AG04449 (cell line): ENCODE measurements at regions of chr2 and their contacts with region 1.

Region 1: GRCh38 chr2:197124639-197125390 is 185.8 kb downstream of the ANKRD44 start:
- DNase-seq: peak; percentile 50
- H3K4me3 ChIP-seq: no peak overlapping the region
- CTCF ChIP-seq: no peak

Region 2: DNA sequence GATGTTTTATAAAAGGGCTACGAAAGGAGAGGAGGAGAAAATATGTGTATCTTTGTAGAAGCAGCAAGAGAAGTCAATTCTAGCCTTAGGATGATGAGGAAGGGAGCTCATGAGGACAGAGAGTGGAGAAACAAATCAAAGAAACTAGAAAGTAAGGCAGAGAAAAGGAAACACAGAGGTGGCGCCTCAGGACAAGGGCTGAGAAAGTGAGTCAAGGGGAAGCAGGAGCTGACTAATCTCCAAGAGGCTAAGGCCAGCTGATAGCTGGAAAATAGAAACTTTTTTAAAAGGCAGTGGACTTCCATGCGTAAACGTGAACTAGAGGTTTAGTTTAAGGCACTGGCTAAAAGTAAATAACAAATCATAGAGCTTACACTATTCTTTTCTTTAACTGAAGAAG is 12.4 kb after region 1 on chr2:
- CTCF ChIA-PET with region 1: interaction called, 17 read pairs
- POLR2A ChIA-PET with region 1: interaction called, 3 read pairs
- DNase-seq: no peak
- H3K4me3 ChIP-seq: no peak overlapping the region
- CTCF ChIP-seq: no peak